ENCODE measurements at regions of chr5 and their contacts with region 1.

Region 1: DNA sequence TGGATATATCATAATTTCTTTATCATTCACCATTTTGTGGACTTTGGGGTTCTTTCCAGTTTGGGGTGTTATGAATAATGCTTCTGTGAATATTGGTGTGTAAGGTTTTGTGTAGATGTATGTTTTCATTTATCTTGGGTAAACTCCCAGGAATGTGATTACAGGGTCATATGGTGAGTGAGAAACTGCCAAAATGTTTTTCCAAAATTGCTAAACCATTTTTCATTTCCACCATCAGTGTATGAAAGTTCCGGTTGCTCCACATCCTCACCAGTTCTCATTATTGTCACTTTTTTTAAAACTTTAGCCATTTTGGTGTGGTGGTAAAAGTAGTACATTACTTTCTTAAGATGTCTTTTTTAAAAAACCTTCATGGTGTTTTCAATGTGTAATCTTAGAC is 152.9 kb downstream of the NIPBL start:
- DNase-seq: no peak
- H3K4me3 ChIP-seq: no peak overlapping the region
- H3K27ac ChIP-seq: no peak overlapping the region
- H3K4me1 ChIP-seq: no peaks in the 10 kb centered on the region
- H3K27me3 ChIP-seq: no peaks in the 10 kb centered on the region
- CTCF ChIP-seq: no peak
- POLR2A ChIP-seq: no peak

Region 2: DNA sequence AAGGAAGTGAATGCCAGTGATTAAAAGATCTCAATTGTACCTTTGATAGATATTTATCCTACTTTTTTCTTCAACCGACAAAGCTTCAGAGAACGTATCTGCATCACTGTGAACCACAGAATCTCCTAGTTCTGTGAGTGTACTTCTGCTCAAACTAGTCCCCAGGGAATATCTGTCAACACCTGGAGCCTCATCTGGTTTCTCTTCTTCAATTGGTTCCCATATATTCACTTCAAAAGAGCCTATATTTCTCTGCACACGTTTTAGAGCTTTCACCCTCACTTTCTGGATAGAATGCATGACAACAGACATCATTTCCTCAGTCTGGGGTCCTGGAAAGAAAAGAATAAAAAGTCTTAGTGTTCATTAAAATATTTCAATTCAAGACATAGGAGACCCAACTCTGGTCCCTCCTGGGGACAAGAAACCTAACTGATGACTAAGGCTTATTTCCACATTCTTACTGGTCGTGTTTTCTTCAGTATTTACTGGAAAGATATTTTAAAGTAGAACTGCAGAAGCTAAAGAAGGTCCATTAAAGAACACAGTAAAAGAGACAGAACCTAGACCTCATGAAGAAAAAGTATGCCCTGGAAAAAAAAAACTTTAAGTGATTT is 155.4 kb after region 1 on chr5:
- intact Hi-C with region 1: no loop called
- DNase-seq: no peak
- H3K4me3 ChIP-seq: no peak overlapping the region
- H3K27ac ChIP-seq: no peak overlapping the region
- H3K4me1 ChIP-seq: no peaks in the 10 kb centered on the region
- H3K27me3 ChIP-seq: no peaks in the 10 kb centered on the region
- CTCF ChIP-seq: no peak
- POLR2A ChIP-seq: no peak

Region 3: GRCh38 chr5:37308796-37309195 is 279.4 kb after region 1 on chr5:
- intact Hi-C with region 1: loop called in 1 of 2 experiments (anchors 10 kb)
- DNase-seq: no peak
- H3K4me3 ChIP-seq: no peak overlapping the region
- H3K27ac ChIP-seq: no peak overlapping the region
- H3K4me1 ChIP-seq: no peaks in the 10 kb centered on the region
- H3K27me3 ChIP-seq: no peaks in the 10 kb centered on the region
- CTCF ChIP-seq: no peak
- POLR2A ChIP-seq: no peak